CD4-positive, alpha-beta T cell (primary cell): ENCODE measurements at regions of chr5 and their contacts with region 1.

Region 1: GRCh38 chr5:135191084-135191826 is 157.2 kb upstream of the PITX1 start:
- DNase-seq: peak; percentile 46 to 81 (median 64)
- ATAC-seq: peak; percentile 99
- H3K4me3 ChIP-seq: peak overlapping the region; percentile 36
- H3K4me3 Mint-ChIP-seq: peak overlapping the region; percentile 80
- H3K27ac ChIP-seq: no peak overlapping the region
- H3K27ac Mint-ChIP-seq: no peak overlapping the region
- H3K4me1 ChIP-seq: peaks cover 12% of the 10 kb centered on the region
- H3K4me1 Mint-ChIP-seq: peaks cover under 1% of the 10 kb centered on the region
- H3K27me3 ChIP-seq: peaks cover 12 to 26% of the 10 kb centered on the region in 2 experiments
- H3K27me3 Mint-ChIP-seq: peaks cover 62% of the 10 kb centered on the region
- CTCF ChIP-seq: peak; percentile 86

Region 2: GRCh38 chr5:134304311-134304710 is 886.9 kb before region 1 on chr5:
- CTCF ChIA-PET with region 1: no interaction called
- POLR2A ChIA-PET with region 1: no interaction called
- intact Hi-C with region 1: loop called in 1 of 2 experiments (anchors 5 kb)
- DNase-seq: no peak
- ATAC-seq: no peak
- H3K4me3 ChIP-seq: no peak overlapping the region
- H3K4me3 Mint-ChIP-seq: no peak overlapping the region
- H3K27ac ChIP-seq: no peak overlapping the region
- H3K27ac Mint-ChIP-seq: no peak overlapping the region
- H3K4me1 ChIP-seq: peaks cover 3% of the 10 kb centered on the region
- H3K4me1 Mint-ChIP-seq: no peaks in the 10 kb centered on the region
- H3K27me3 ChIP-seq: no peaks in the 10 kb centered on the region
- H3K27me3 Mint-ChIP-seq: no peaks in the 10 kb centered on the region
- CTCF ChIP-seq: no peak

Region 3: GRCh38 chr5:134917070-134917815 is 274.0 kb before region 1 on chr5:
- CTCF ChIA-PET with region 1: interaction called, 3 read pairs
- POLR2A ChIA-PET with region 1: no interaction called
- intact Hi-C with region 1: loop called in 1 of 2 experiments (anchors 5 kb)
- DNase-seq: peak in 1 of 14 experiments; percentile 9
- ATAC-seq: no peak
- H3K4me3 ChIP-seq: no peak overlapping the region
- H3K4me3 Mint-ChIP-seq: no peak overlapping the region
- H3K27ac ChIP-seq: no peak overlapping the region
- H3K27ac Mint-ChIP-seq: no peak overlapping the region
- H3K4me1 ChIP-seq: no peaks in the 10 kb centered on the region
- H3K4me1 Mint-ChIP-seq: peaks cover 12% of the 10 kb centered on the region
- H3K27me3 ChIP-seq: no peaks in the 10 kb centered on the region
- H3K27me3 Mint-ChIP-seq: no peaks in the 10 kb centered on the region
- CTCF ChIP-seq: no peak

Region 4: DNA sequence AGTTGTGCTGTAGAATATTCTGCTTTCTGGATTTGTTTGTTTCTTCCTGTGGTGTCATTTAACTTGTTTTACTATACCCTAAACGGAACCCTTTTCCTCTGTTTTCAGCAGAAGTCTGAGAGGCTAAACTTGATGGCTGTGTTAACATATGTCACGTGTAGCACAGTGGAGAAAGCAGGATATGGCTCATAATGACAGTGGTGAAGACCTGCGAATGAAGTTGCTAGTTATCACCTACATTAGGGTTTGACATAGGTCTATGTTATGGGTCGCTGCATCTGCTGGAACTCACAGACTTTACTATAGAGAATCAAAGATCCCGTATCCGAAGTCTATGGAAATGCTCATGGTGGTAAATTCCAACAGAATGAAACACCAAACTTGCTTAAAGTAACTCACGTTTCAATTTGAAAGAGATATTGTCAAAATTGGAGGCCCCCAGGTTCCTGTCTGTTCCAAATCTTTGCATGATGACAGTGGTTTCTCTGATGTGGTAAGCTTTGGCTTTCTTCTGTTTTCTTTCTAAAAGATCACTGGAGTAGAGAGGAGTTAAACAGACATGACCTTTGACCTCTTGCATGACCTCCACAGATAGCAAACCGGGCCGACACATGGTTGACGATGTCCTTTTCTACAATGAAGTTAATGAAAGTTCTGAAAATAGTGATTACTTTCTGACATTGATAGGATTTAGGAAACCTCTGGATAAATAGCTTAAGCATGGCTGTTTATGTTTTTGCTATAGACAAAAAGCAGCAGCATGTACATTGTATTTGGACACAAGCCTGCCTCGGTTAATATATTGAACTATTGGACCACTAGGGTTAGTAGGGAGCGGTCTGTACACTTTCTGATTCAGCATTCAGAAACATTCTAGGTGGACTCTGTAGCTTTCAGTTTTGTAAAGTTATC is 226.6 kb before region 1 on chr5:
- CTCF ChIA-PET with region 1: no interaction called
- POLR2A ChIA-PET with region 1: no interaction called
- intact Hi-C with region 1: loop called in 1 of 2 experiments (anchors 10 kb)
- DNase-seq: peak in 5 of 14 experiments; percentile 10 to 64 (median 53)
- ATAC-seq: peak; percentile 91
- H3K4me3 ChIP-seq: no peak overlapping the region
- H3K4me3 Mint-ChIP-seq: peak overlapping the region; percentile 53
- H3K27ac ChIP-seq: peak overlapping the region; percentile 3 to 42
- H3K27ac Mint-ChIP-seq: peak overlapping the region; percentile 93
- H3K4me1 ChIP-seq: peaks cover 19% of the 10 kb centered on the region
- H3K4me1 Mint-ChIP-seq: peaks cover 39% of the 10 kb centered on the region
- H3K27me3 ChIP-seq: no peaks in the 10 kb centered on the region
- H3K27me3 Mint-ChIP-seq: no peaks in the 10 kb centered on the region
- CTCF ChIP-seq: no peak

Region 5: DNA sequence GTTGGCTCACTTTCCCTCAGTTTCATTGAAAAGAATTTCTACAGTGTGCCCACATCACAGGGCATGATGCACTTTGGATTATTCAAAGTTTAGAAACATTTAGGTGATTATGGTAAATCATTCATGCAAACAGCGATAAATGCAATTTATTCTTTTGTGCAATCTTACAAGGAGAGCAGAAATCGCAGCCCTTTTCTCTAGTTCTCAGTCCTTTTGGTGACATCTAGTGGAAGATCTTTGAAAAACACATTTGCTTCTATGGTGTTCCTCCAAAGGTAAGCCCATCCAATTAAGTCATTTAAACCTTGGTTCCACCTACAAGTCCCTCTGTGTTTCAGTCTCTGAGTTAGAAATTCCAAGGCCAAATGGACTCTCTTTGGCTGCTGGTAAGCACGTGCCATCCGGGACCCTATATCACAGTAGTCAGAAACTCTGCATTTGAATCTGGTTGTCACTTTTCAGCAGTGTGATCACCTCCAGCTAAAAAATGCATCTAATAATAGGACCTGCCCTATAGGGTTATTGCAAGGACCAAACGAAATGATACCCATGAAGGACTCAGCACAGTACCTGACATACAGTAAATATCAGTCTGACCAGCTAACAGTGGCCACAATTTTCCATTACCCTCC is 141.4 kb after region 1 on chr5:
- CTCF ChIA-PET with region 1: no interaction called
- POLR2A ChIA-PET with region 1: no interaction called
- intact Hi-C with region 1: loop called in 1 of 2 experiments (anchors 2 kb)
- DNase-seq: peak in 3 of 14 experiments; percentile 33 to 47 (median 37)
- ATAC-seq: peak; percentile 55
- H3K4me3 ChIP-seq: no peak overlapping the region
- H3K4me3 Mint-ChIP-seq: no peak overlapping the region
- H3K27ac ChIP-seq: no peak overlapping the region
- H3K27ac Mint-ChIP-seq: no peak overlapping the region
- H3K4me1 ChIP-seq: no peaks in the 10 kb centered on the region
- H3K4me1 Mint-ChIP-seq: peaks cover 7% of the 10 kb centered on the region
- H3K27me3 ChIP-seq: no peaks in the 10 kb centered on the region
- H3K27me3 Mint-ChIP-seq: no peaks in the 10 kb centered on the region
- CTCF ChIP-seq: peak; percentile 62